ENCODE measurements at regions of chr6 and their contacts with region 1.

Region 1: DNA sequence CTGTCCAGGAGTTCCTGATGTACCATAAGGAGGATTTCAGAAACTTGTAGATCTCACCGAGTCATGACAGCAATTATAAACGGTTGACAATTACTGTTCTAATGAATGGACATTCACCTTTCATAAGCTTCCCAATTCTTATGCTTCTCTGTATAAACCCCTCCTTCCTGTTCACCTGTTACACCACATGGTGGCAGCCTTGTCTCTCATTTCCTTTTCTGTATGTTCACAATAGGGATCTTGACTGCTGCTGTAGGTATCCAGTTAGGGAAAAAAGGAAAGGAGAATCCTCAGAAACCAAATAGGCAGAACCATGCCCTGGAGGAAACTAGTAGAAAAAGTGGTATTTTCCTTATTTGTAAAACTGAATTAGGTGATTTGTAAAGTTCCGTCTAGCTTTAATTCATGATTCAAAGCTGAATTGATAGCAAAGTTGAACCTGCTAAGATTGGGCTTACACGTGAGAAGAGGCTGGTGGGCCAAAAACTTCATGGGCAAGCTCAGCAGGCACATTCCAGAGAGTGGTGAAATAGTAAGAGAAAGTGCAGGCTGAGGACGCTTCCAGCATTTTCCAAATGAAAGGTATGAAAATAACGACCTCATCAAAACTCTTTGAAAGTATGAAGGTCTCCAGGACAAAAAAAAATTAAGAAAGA is 29.0 kb upstream of the TBPL1 start:
- DNase-seq: peak in 1 of 2 experiments; percentile 60
- H3K4me3 ChIP-seq: peak overlapping the region in 1 of 4 experiments; percentile 27; a peak in 1 of 8 replicates
- H3K27ac ChIP-seq: no peak overlapping the region
- H3K4me1 ChIP-seq: peaks cover 0 to 3% (median 0%) of the 10 kb centered on the region in 4 experiments; a peak in 1 of 7 replicates
- H3K27me3 ChIP-seq: no peaks in the 10 kb centered on the region
- CTCF ChIP-seq: peak in 2 of 3 experiments; percentile 77 to 83; a peak in 3 of 4 replicates
- EP300 ChIP-seq: no peak
- POLR2A ChIP-seq: no peak
- RAD21 ChIP-seq: peak; percentile 96

Region 2: DNA sequence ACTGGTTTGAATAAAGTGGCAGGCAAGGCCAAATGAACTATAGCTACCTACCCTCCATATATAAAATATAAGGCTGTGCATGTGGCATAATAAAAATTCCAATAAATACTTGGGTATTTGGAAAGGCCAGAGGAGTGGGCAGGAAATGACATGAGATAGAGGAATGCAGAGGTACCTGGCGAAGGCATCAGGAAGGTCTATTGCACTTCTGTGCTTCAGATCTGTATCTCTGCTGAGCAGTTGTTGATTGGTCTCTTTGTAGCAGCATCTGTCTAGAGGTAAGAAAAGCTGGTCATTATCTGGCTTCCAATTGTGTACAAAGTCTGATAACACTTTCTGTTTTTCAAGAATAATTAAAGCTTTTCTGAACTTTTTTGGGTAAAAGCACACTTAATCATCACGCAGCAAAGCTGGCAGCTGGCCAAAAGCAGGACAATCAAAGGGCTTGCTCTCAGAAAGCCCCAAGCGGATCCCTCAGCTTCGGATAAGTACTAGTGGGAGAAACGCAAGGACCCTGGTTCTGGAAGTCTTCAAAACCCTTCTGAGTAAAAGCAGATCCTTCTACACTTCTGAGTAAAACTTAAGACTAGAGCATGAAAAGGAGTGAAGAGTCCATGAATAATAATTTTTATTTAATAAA is 155.3 kb before region 1 on chr6:
- CTCF ChIA-PET with region 1: no interaction called
- POLR2A ChIA-PET with region 1: no interaction called
- DNase-seq: no peak
- H3K4me3 ChIP-seq: no peak overlapping the region
- H3K27ac ChIP-seq: no peak overlapping the region
- H3K4me1 ChIP-seq: peaks cover 0 to 3% (median 0%) of the 10 kb centered on the region in 4 experiments; a peak in 1 of 7 replicates
- H3K27me3 ChIP-seq: no peaks in the 10 kb centered on the region
- CTCF ChIP-seq: no peak
- EP300 ChIP-seq: no peak
- POLR2A ChIP-seq: no peak
- RAD21 ChIP-seq: no peak

Region 3: DNA sequence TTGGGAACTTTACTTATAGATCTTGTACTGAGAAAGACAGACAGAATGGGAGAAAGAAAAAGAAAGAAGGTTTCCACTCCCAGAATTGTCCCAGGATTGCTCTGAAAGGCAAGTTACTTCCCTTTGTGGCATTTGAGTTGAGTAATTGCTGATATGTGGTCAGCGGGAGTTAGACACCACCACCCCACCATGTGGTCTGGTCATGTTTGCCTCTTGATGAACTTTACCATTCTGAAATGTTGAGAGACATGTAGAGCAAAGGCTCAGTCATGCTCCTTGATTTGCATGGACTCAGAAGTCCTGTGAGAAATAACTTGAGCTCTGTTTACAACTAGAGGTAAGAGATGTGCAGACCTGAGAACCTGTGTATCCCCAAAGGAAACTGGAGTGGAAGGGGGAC is 18.0 kb before region 1 on chr6:
- CTCF ChIA-PET with region 1: interaction called, 14 read pairs
- POLR2A ChIA-PET with region 1: no interaction called
- DNase-seq: no peak
- H3K4me3 ChIP-seq: no peak overlapping the region
- H3K27ac ChIP-seq: no peak overlapping the region
- H3K4me1 ChIP-seq: no peaks in the 10 kb centered on the region
- H3K27me3 ChIP-seq: no peaks in the 10 kb centered on the region
- CTCF ChIP-seq: no peak
- EP300 ChIP-seq: no peak
- POLR2A ChIP-seq: no peak
- RAD21 ChIP-seq: no peak

Region 4: DNA sequence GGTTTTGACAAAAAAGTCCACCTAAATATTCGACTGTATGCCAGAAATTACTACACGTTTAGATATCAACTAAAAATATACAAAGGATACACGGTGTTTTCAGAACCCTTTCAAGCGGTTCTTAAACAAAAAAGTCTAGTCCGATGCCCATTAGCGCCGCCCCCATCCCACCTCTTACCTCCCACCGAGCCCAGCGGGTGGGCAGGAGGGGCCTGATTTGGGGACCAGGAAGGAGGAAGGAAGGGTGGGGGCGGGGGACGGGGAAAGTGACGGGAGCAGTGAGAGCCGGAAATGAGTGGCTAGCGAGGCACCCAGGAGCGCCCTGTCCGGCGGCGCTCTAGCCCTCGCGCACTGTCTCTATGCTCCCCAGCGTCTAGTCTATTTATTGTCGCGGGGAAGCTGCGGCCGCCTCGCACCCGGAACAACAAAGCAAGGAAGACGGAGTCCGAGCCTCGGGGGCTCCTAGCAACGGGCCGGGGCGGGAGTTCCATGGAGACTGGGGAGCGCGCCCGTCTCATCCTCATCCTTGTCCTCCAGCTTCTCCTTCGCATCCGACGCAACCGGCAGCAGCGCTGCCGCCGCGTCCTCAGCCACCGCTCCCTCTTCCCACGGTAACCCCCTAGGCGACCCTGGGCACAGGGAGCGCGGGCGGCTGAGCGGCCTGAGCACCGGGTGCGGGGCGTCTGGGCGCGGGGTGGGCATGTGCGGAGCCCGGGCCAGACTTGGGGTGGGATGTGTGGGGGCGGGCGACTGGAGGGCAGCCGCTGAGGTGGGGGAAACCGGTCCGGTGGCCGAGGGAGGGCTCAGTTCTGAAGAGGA is 29.0 kb after region 1 on chr6 and contains the start of gene TBPL1:
- CTCF ChIA-PET with region 1: interaction called, 29 read pairs
- POLR2A ChIA-PET with region 1: no interaction called
- DNase-seq: peak; percentile 86 to 93
- H3K4me3 ChIP-seq: peak within 1 kb of the TSS; percentile 81 to 92 (median 88)
- H3K27ac ChIP-seq: peak within 1 kb of the TSS; percentile 74; the same call in 1 of the 2 replicates
- H3K4me1 ChIP-seq: peaks cover 0 to 10% (median 3%) of the 10 kb centered on the region in 4 experiments; a peak in 6 of 7 replicates
- H3K27me3 ChIP-seq: no peaks in the 10 kb centered on the region; a peak in 1 of 7 replicates
- CTCF ChIP-seq: no peak
- EP300 ChIP-seq: peak in 1 of 2 experiments; percentile 52; a peak in 1 of 3 replicates
- POLR2A ChIP-seq: peak; percentile 57 to 93
- RAD21 ChIP-seq: no peak
- total RNA-seq, gene TBPL1: 66.3 and 67.0 TPM in 2 replicates

Region 5: GRCh38 chr6:133973109-133973971 is 49.3 kb after region 1 on chr6:
- CTCF ChIA-PET with region 1: interaction called, 63 read pairs
- POLR2A ChIA-PET with region 1: no interaction called
- DNase-seq: no peak
- H3K4me3 ChIP-seq: no peak overlapping the region
- H3K27ac ChIP-seq: no peak overlapping the region
- H3K4me1 ChIP-seq: peaks cover 0 to 7% (median 0%) of the 10 kb centered on the region in 4 experiments; a peak in 3 of 7 replicates
- H3K27me3 ChIP-seq: no peaks in the 10 kb centered on the region
- CTCF ChIP-seq: peak in 2 of 3 experiments; percentile 38 to 53; a peak in 2 of 4 replicates
- EP300 ChIP-seq: no peak
- POLR2A ChIP-seq: no peak
- RAD21 ChIP-seq: peak; percentile 71 to 75

Region 6: GRCh38 chr6:134080171-134080795 is 156.2 kb after region 1 on chr6:
- CTCF ChIA-PET with region 1: interaction called, 48 read pairs
- POLR2A ChIA-PET with region 1: no interaction called
- DNase-seq: no peak
- H3K4me3 ChIP-seq: no peak overlapping the region
- H3K27ac ChIP-seq: no peak overlapping the region
- H3K4me1 ChIP-seq: no peaks in the 10 kb centered on the region
- H3K27me3 ChIP-seq: no peaks in the 10 kb centered on the region
- CTCF ChIP-seq: no peak
- EP300 ChIP-seq: no peak
- POLR2A ChIP-seq: no peak
- RAD21 ChIP-seq: no peak

Region 7: DNA sequence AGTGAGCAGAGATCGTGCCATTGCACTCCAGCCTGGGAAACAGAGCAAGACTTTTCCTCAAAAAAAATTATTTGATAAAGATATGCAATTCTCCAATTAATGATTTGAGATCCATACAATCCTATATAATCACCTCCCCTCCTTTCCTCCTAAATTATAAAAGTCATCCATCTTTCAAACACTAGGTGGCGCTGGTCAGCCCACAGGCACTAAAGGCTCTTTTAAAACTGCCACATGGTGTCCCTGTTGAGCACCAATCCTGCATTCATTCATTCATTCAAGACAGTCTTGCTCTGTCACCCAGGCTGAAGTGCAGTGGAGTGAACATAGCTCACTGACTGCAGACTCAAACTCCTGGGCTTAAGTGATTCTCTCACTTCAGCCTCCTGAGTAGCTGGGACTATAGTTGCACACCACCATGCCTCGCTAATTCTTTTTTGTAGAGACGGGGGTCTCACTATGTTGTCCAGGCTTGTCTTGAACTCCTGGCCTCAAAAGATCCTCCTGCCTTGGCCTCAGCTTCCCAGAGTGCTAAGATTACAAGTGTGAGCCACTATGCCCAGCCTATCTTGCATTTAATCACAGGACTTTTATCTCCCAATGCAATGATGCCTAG is 187.1 kb after region 1 on chr6:
- CTCF ChIA-PET with region 1: interaction called, 77 read pairs
- POLR2A ChIA-PET with region 1: no interaction called
- DNase-seq: no peak
- H3K4me3 ChIP-seq: no peak overlapping the region
- H3K27ac ChIP-seq: no peak overlapping the region
- H3K4me1 ChIP-seq: no peaks in the 10 kb centered on the region
- H3K27me3 ChIP-seq: no peaks in the 10 kb centered on the region
- CTCF ChIP-seq: peak; percentile 59 to 100 (median 96)
- EP300 ChIP-seq: no peak
- POLR2A ChIP-seq: no peak
- RAD21 ChIP-seq: peak; percentile 60 to 69